Caco-2 (cell line): ENCODE measurements at regions of chr3 and their contacts with region 1.

Region 1: GRCh38 chr3:37466660-37467359 is 292.4 kb upstream of the LRRFIP2 start:
- DNase-seq: peak; percentile 33 to 50
- H3K4me3 ChIP-seq: no peak overlapping the region
- H3K4me3 Mint-ChIP-seq: no peak overlapping the region
- H3K27ac Mint-ChIP-seq: no peak overlapping the region
- H3K4me1 ChIP-seq: peaks cover 14% of the 10 kb centered on the region; the same call in 1 of the 2 replicates
- H3K4me1 Mint-ChIP-seq: peaks cover 8% of the 10 kb centered on the region
- H3K27me3 ChIP-seq: no peaks in the 10 kb centered on the region
- H3K27me3 Mint-ChIP-seq: no peaks in the 10 kb centered on the region
- CTCF ChIP-seq: no peak

Region 2: DNA sequence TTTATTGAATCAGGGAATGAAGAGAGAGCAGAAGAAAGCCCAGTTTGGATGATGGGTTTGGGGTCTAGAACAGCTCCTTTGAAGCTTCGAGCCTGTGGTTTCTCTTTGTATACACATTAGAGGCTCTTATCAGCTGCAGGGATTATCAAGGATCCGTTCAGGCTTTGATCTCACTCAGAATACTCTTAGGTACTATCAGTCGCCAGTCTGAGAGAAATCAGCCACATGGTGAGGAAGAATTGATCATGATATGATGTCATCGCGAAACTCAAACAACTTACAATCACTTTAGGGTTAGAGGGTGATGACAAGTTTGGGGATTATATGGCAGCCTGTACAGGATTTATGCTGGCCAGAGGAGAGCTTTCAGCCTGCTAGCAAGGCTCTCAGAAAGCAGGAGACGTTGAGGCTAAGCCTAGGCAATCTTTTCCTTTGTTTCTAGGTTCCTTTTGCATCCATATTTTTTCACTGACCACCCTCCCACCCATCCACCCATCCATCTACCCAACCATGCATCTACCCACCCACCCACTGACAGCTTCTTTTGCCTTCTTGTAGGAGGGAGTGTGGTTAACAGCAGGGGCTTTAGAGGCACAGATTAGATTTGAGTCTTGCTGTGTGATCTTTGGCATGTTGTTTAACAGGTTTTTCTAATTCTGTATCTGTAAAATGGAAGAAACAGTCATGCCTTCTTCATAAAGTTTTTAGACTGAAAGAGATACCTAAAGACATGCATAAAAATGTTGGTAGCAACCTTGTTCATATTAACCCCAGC is 38.0 kb after region 1 on chr3:
- CTCF ChIA-PET with region 1: no interaction called
- POLR2A ChIA-PET with region 1: no interaction called
- intact Hi-C with region 1: loop called (anchors 5 kb)
- DNase-seq: peak; percentile 77 to 80
- H3K4me3 ChIP-seq: no peak overlapping the region
- H3K4me3 Mint-ChIP-seq: peak overlapping the region; percentile 39
- H3K27ac Mint-ChIP-seq: peak overlapping the region; percentile 69
- H3K4me1 ChIP-seq: peaks cover 53% of the 10 kb centered on the region
- H3K4me1 Mint-ChIP-seq: peaks cover 56% of the 10 kb centered on the region
- H3K27me3 ChIP-seq: no peaks in the 10 kb centered on the region
- H3K27me3 Mint-ChIP-seq: no peaks in the 10 kb centered on the region
- CTCF ChIP-seq: no peak

Region 3: DNA sequence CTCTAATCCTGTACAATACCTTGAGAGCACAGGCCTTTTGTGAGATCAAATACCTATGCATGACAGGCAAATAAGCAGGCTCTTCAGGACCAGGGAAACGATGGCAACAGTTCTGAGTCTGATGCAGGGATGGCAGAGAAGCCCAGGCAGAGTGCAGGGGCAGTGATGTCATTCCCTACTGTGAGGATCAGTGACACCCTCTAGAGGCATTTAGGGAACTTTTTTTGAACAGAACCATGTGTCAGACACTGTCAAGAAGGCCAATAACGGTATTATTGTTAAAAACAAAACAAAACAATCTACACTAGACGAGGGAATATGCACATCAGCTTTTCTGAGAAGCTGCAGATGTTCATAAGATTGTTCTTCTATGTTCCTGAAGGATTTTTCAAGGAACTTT is 80.1 kb after region 1 on chr3:
- CTCF ChIA-PET with region 1: no interaction called
- POLR2A ChIA-PET with region 1: no interaction called
- intact Hi-C with region 1: loop called (anchors 5 kb)
- DNase-seq: peak in 1 of 2 experiments; percentile 27
- H3K4me3 ChIP-seq: no peak overlapping the region
- H3K4me3 Mint-ChIP-seq: no peak overlapping the region
- H3K27ac Mint-ChIP-seq: no peak overlapping the region
- H3K4me1 ChIP-seq: no peaks in the 10 kb centered on the region
- H3K4me1 Mint-ChIP-seq: peaks cover 11% of the 10 kb centered on the region
- H3K27me3 ChIP-seq: no peaks in the 10 kb centered on the region
- H3K27me3 Mint-ChIP-seq: no peaks in the 10 kb centered on the region
- CTCF ChIP-seq: peak in 1 of 2 experiments; percentile 15

Region 4: GRCh38 chr3:37601832-37602231 is 135.0 kb after region 1 on chr3:
- CTCF ChIA-PET with region 1: no interaction called
- POLR2A ChIA-PET with region 1: no interaction called
- intact Hi-C with region 1: no loop called
- DNase-seq: no peak
- H3K4me3 ChIP-seq: no peak overlapping the region
- H3K4me3 Mint-ChIP-seq: no peak overlapping the region
- H3K27ac Mint-ChIP-seq: no peak overlapping the region
- H3K4me1 ChIP-seq: no peaks in the 10 kb centered on the region
- H3K4me1 Mint-ChIP-seq: peaks cover 13% of the 10 kb centered on the region
- H3K27me3 ChIP-seq: no peaks in the 10 kb centered on the region
- H3K27me3 Mint-ChIP-seq: no peaks in the 10 kb centered on the region
- CTCF ChIP-seq: no peak